Right cardiac atrium (tissue), 5 donors: ENCODE measurements at regions of chr10 and their contacts with region 1.

Region 1: DNA sequence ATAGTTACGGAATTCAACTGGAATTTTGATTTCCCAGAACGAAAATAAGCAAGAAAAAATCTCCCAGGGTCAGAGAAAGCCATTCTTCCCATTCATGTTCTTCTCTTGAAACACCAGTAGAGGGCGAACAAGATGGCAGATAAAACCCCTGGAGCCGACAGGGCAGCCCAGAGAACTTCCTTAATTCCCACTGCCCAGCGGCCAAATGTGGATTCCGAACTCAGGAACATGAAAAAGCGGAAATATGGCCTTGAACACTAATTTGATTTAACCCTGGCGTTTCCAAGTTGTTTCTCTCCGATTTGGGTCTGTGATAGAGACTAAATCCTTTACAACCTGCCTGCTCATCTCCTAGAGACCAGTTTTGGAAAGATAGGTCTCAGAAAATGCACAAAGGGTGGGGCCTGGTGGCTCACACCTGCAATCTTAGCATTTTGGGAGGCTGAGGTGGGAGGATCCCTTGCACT is 100.7 kb upstream of the WAC start:
- DNase-seq: peak; percentile 66 to 79 (median 67)
- ATAC-seq: peak; percentile 83 to 86
- H3K4me3 ChIP-seq: no peak overlapping the region
- H3K27ac ChIP-seq: no peak overlapping the region
- H3K4me1 ChIP-seq: no peaks in the 10 kb centered on the region
- H3K27me3 ChIP-seq: no peaks in the 10 kb centered on the region

Region 2: GRCh38 chr10:28202941-28203352 is 229.3 kb before region 1 on chr10:
- intact Hi-C with region 1: no loop called
- DNase-seq: peak; percentile 61 to 79 (median 62)
- ATAC-seq: peak; percentile 92 to 97
- H3K4me3 ChIP-seq: no peak overlapping the region
- H3K27ac ChIP-seq: no peak overlapping the region
- H3K4me1 ChIP-seq: no peaks in the 10 kb centered on the region
- H3K27me3 ChIP-seq: no peaks in the 10 kb centered on the region

Region 3: DNA sequence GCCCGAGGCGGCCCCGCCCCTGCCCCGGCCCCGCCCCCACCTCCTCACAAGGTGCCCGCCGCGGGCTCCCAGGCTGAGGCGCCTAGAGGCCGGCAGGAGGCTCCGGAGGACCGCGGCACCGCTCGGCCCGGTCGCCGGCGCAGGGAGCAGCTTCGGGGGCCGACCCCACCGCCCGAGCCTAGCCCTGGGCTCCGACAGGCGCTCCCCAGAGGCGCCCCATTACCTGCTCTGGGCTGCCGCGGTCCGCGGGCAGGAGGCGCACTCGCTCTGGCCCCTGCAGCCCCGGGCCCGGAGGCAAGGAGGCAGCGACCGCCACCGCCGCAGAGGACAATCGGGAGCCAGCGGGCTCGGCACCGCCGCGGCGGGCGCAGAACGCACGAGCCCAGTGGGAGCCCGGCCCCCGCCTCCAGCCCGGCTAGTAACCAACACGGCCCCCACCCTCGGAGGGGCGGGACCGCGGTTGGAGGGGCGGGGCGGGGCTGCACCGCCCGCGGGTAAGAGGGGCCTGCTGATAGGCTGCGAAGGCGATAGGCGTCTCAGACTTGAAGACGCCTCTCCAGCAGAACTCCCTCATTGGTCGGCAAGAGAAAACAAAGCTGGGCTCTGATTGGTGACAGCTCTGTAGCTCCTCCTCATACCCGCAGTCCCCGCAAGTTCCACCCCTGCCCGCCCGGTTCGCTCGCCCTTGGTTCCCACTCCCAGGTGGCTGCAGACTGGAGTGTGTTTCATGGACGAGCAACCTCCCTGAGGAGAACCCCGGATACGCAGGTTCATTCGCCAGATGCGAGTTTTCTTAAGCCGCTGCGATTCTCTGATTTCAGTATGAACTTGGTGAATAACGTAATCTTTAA is 129.4 kb before region 1 on chr10 and contains the start of gene MPP7:
- intact Hi-C with region 1: no loop called
- DNase-seq: peak; percentile 94 to 98 (median 98)
- ATAC-seq: peak; percentile 100
- H3K4me3 ChIP-seq: peak within 1 kb of the TSS; percentile 75
- H3K27ac ChIP-seq: peak within 1 kb of the TSS; percentile 69
- H3K4me1 ChIP-seq: no peaks in the 10 kb centered on the region
- H3K27me3 ChIP-seq: no peaks in the 10 kb centered on the region
- total RNA-seq, gene MPP7: 11.5 to 20.3 (median 16.1) TPM

Region 4: GRCh38 chr10:28532383-28533175 is 100.3 kb after region 1 on chr10 and contains the start of gene WAC:
- intact Hi-C with region 1: loop called in 2 of 4 experiments (anchors 5 to 10 kb)
- DNase-seq: peak; percentile 96 to 99 (median 98)
- ATAC-seq: peak; percentile 96
- H3K4me3 ChIP-seq: peak within 1 kb of the TSS; percentile 98
- H3K27ac ChIP-seq: peak within 1 kb of the TSS; percentile 98
- H3K4me1 ChIP-seq: peaks cover 1% of the 10 kb centered on the region
- H3K27me3 ChIP-seq: no peaks in the 10 kb centered on the region
- total RNA-seq, gene WAC: 102 to 110 (median 104) TPM